Transverse colon (tissue), 4 donors: ENCODE measurements at regions of chr2 and their contacts with region 1.

Region 1: DNA sequence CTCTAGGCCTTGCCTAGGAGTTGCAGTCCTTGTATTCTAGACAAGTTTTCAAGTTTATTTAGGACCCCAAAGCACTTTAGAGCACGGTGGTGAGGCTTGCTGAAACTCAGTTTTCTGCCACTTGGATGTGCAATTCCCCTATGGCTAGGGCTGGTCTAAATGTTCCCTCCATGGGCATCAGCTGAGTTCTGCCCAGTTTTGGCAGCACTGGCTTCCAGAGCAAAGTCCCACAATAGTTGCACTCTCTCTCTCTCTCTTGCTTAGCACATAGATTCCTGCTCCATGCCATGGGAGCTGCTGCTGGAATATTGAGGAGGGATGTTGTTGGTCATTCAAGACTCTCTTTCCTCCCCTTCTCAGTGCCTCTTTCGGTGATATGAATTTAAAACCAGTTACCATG is 760.2 kb upstream of the SLC39A10 start:
- DNase-seq: no peak
- H3K4me3 ChIP-seq: no peak overlapping the region
- H3K27ac ChIP-seq: no peak overlapping the region
- H3K4me1 ChIP-seq: no peaks in the 10 kb centered on the region
- H3K27me3 ChIP-seq: no peaks in the 10 kb centered on the region
- CTCF ChIP-seq: no peak
- EP300 ChIP-seq: no peak
- POLR2A ChIP-seq: no peak

Region 2: GRCh38 chr2:194443926-194444325 is 452.9 kb before region 1 on chr2:
- in situ Hi-C with region 1: no loop called
- intact Hi-C with region 1: no loop called
- DNase-seq: no peak
- H3K4me3 ChIP-seq: no peak overlapping the region
- H3K27ac ChIP-seq: no peak overlapping the region
- H3K4me1 ChIP-seq: no peaks in the 10 kb centered on the region
- H3K27me3 ChIP-seq: no peaks in the 10 kb centered on the region
- CTCF ChIP-seq: no peak
- EP300 ChIP-seq: no peak
- POLR2A ChIP-seq: no peak

Region 3: GRCh38 chr2:195813421-195813820 is 916.5 kb after region 1 on chr2:
- in situ Hi-C with region 1: no loop called
- intact Hi-C with region 1: loop called (anchors 5 kb)
- DNase-seq: no peak
- H3K4me3 ChIP-seq: no peak overlapping the region
- H3K27ac ChIP-seq: no peak overlapping the region
- H3K4me1 ChIP-seq: peaks cover 0 to 4% (median 0%) of the 10 kb centered on the region in 4 donors
- H3K27me3 ChIP-seq: no peaks in the 10 kb centered on the region
- CTCF ChIP-seq: no peak
- EP300 ChIP-seq: no peak
- POLR2A ChIP-seq: no peak